ENCODE measurements at regions of chr18 and their contacts with region 1.

Region 1: GRCh38 chr18:42310956-42311355 is 355.9 kb downstream of the PIK3C3 start:
- DNase-seq: no peak
- ATAC-seq: no peak
- H3K4me3 Mint-ChIP-seq: no peak overlapping the region
- H3K27ac Mint-ChIP-seq: no peak overlapping the region
- H3K4me1 Mint-ChIP-seq: no peaks in the 10 kb centered on the region
- H3K27me3 Mint-ChIP-seq: no peaks in the 10 kb centered on the region
- CTCF ChIP-seq: no peak

Region 2: GRCh38 chr18:42287047-42287446 is 23.9 kb before region 1 on chr18:
- CTCF ChIA-PET with region 1: no interaction called
- POLR2A ChIA-PET with region 1: no interaction called
- intact Hi-C with region 1: no loop called
- DNase-seq: no peak
- ATAC-seq: no peak
- H3K4me3 Mint-ChIP-seq: no peak overlapping the region
- H3K27ac Mint-ChIP-seq: no peak overlapping the region
- H3K4me1 Mint-ChIP-seq: no peaks in the 10 kb centered on the region
- H3K27me3 Mint-ChIP-seq: no peaks in the 10 kb centered on the region
- CTCF ChIP-seq: no peak

Region 3: GRCh38 chr18:42298759-42299675 is 11.9 kb before region 1 on chr18:
- CTCF ChIA-PET with region 1: interaction called, 27 read pairs
- POLR2A ChIA-PET with region 1: no interaction called
- intact Hi-C with region 1: no loop called
- DNase-seq: peak; percentile 77
- ATAC-seq: peak; percentile 58
- H3K4me3 Mint-ChIP-seq: no peak overlapping the region
- H3K27ac Mint-ChIP-seq: no peak overlapping the region
- H3K4me1 Mint-ChIP-seq: no peaks in the 10 kb centered on the region
- H3K27me3 Mint-ChIP-seq: peaks cover 3% of the 10 kb centered on the region
- CTCF ChIP-seq: peak; percentile 76

Region 4: GRCh38 chr18:43271593-43272432 is 960.9 kb after region 1 on chr18:
- CTCF ChIA-PET with region 1: no interaction called
- POLR2A ChIA-PET with region 1: no interaction called
- intact Hi-C with region 1: loop called (anchors 10 kb)
- DNase-seq: peak; percentile 17
- ATAC-seq: peak; percentile 56
- H3K4me3 Mint-ChIP-seq: no peak overlapping the region
- H3K27ac Mint-ChIP-seq: no peak overlapping the region
- H3K4me1 Mint-ChIP-seq: no peaks in the 10 kb centered on the region
- H3K27me3 Mint-ChIP-seq: no peaks in the 10 kb centered on the region
- CTCF ChIP-seq: peak; percentile 79

Measured in activated CD8-positive, alpha-beta T cell treated with anti-CD3 and anti-CD28 coated beads for 36 hours (primary cell).